ENCODE measurements at regions of chr13 and their contacts with region 1.

Region 1: DNA sequence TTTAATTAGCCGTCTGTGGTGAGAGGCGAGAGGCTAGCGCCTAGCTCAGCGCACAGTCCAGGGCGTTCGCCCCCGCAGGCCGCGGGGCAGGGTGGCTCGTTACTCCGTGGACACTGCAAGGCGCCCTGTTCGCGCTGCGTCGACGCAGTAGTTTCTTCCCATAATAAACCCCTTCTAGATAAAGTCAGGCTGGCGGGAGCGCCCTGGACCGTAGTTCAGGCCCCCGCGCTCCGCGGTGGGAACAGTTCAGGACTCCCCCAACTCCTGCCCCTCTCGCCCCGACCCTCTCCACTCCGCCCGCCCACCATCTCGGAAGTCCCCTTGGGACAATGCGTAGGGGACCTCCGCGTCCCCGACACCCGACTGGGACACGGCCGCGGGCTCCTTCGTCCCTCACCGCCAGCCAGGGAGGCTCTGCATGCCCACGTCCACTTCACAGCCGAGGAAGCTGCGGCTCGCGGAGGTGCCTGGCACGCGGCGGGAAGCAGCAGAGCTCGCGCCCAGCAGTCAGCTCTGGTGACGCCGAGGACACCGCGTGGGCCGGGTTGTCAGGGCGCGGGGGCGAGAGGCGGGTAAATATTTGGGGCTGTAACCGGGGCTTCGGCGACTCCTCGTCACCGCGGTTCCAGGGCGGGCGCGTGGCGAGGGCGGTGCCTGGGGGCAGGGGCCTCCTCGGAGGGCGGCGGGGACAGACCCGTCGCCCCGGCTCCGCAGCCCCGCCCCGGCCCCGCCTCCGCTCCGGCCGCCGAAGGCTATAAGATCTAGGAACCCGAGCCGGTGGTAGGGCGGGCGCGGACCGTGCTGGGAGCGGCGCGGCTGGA is at the start of gene RGCC:
- DNase-seq: peak; percentile 89 to 98 (median 94)
- ATAC-seq: peak; percentile 90
- H3K4me3 ChIP-seq: peak within 1 kb of the TSS; percentile 84
- H3K4me3 Mint-ChIP-seq: peak within 1 kb of the TSS; percentile 91 to 98 (median 96)
- H3K27ac ChIP-seq: peak within 1 kb of the TSS; percentile 97
- H3K27ac Mint-ChIP-seq: peak within 1 kb of the TSS; percentile 93 to 99 (median 98)
- H3K4me1 ChIP-seq: peaks cover 22 to 37% of the 10 kb centered on the region in 2 donors
- H3K4me1 Mint-ChIP-seq: peaks cover 28 to 47% (median 38%) of the 10 kb centered on the region in 7 donors
- H3K27me3 ChIP-seq: no peaks in the 10 kb centered on the region
- H3K27me3 Mint-ChIP-seq: peaks cover 0 to 26% (median 0%) of the 10 kb centered on the region in 5 donors
- total RNA-seq, gene RGCC: 45.9 to 402 (median 197) TPM

Region 2: DNA sequence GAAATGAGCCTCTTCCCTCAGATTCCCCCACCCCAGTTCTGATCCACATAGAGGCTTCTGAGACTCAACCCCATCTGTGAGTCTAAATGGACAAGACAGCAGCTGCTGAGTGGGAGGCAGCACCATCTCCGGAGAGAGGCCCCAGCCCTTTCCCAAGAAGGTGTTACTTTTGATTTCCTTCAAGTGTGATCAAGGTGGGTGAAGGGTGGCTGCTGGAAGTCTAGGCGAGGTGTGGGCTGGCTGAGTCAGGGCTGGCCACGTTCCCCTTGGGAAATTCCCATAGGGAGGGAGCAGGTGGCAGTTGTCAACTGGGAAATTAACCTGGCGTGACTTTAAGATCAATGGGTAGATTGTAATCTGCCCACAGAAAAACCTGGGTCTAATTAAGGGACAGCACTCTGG is 938.5 kb before region 1 on chr13:
- CTCF ChIA-PET with region 1: no interaction called
- POLR2A ChIA-PET with region 1: no interaction called
- intact Hi-C with region 1: no loop called
- DNase-seq: peak in 1 of 9 donors; percentile 75
- ATAC-seq: peak; percentile 46
- H3K4me3 ChIP-seq: no peak overlapping the region
- H3K4me3 Mint-ChIP-seq: peak overlapping the region in 2 of 10 donors; percentile 27 to 53
- H3K27ac ChIP-seq: no peak overlapping the region
- H3K27ac Mint-ChIP-seq: peak overlapping the region in 3 of 9 donors; percentile 1 to 71 (median 36)
- H3K4me1 ChIP-seq: peaks cover 14 to 15% of the 10 kb centered on the region in 2 donors
- H3K4me1 Mint-ChIP-seq: peaks cover 17 to 65% (median 37%) of the 10 kb centered on the region in 7 donors
- H3K27me3 ChIP-seq: no peaks in the 10 kb centered on the region
- H3K27me3 Mint-ChIP-seq: no peaks in the 10 kb centered on the region

Region 3: DNA sequence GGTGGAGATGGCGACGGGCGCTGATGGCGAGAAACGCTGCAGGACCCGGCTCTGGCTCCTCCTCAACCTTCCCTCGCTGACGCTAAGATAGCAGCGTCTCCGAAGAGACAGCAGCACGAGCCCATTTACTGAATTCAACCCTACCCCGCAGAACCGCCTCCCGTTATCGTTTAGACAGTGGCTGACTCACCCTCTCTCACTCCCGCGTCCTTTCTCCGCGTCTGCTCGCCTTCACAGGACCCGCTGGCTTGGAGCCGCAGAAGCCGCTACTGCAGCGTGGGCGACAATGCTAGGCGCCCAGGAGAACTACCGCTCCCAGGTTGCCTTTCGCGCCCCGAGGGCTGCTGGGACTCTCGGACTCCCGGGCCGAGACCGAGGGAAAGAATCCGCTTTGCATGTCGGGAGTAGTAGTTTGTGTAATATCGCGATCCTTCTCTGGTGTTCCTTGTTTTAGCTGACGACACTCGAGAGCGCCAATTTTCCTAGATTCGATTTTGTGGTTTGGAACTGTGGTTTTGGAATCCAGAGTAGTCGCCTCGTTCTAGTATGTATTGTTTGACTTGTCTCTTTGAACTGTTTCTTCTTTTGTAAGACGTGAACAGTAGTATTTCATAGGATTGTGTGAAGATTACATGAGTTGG is 324.3 kb before region 1 on chr13 and contains the start of gene KBTBD6:
- CTCF ChIA-PET with region 1: no interaction called
- POLR2A ChIA-PET with region 1: no interaction called
- intact Hi-C with region 1: loop called (anchors 2 to 5 kb)
- DNase-seq: peak; percentile 76 to 93 (median 87)
- ATAC-seq: peak; percentile 98
- H3K4me3 ChIP-seq: peak within 1 kb of the TSS; percentile 77
- H3K4me3 Mint-ChIP-seq: peak within 1 kb of the TSS; percentile 94 to 99 (median 98)
- H3K27ac ChIP-seq: peak within 1 kb of the TSS; percentile 67
- H3K27ac Mint-ChIP-seq: peak within 1 kb of the TSS; percentile 91 to 97 (median 93)
- H3K4me1 ChIP-seq: peaks cover 15 to 24% of the 10 kb centered on the region in 2 donors
- H3K4me1 Mint-ChIP-seq: peaks cover 32 to 60% (median 54%) of the 10 kb centered on the region in 7 donors
- H3K27me3 ChIP-seq: no peaks in the 10 kb centered on the region
- H3K27me3 Mint-ChIP-seq: no peaks in the 10 kb centered on the region
- total RNA-seq, gene KBTBD6: 3.9 to 9.2 (median 7.7) TPM

Region 4: GRCh38 chr13:41310963-41311606 is 145.9 kb before region 1 on chr13 and contains the start of gene NAA16:
- CTCF ChIA-PET with region 1: no interaction called
- POLR2A ChIA-PET with region 1: interaction called, 3 read pairs
- intact Hi-C with region 1: loop called (anchors 2 kb)
- DNase-seq: peak; percentile 91 to 99 (median 94)
- ATAC-seq: peak; percentile 91
- H3K4me3 ChIP-seq: peak within 1 kb of the TSS; percentile 97
- H3K4me3 Mint-ChIP-seq: peak within 1 kb of the TSS; percentile 80 to 99 (median 98)
- H3K27ac ChIP-seq: peak within 1 kb of the TSS; percentile 91
- H3K27ac Mint-ChIP-seq: peak within 1 kb of the TSS; percentile 76 to 96 (median 95)
- H3K4me1 ChIP-seq: peaks cover 25 to 29% of the 10 kb centered on the region in 2 donors
- H3K4me1 Mint-ChIP-seq: peaks cover 14 to 55% (median 41%) of the 10 kb centered on the region in 7 donors
- H3K27me3 ChIP-seq: no peaks in the 10 kb centered on the region
- H3K27me3 Mint-ChIP-seq: no peaks in the 10 kb centered on the region
- total RNA-seq, gene NAA16: 30.6 to 99.6 (median 90.4) TPM

Region 5: DNA sequence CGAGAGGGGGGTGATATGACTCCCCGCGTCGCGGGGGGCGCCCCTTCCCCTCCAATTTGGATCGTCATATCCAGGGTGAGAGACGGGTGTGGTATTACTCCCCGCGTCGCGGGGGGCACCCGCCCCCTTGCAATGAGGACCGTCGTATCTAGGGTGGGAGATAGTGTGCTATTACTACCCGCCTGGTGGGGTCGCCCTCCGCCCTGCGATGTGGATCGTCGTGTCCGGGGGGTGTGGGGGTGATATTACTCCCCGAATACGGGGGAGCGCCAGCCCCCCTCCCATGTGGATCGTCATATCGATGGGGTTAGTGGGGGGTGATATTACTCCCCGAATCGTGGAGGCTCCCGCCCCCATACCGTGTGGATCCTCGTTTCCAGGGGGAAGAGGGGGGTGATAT is 28.8 kb before region 1 on chr13:
- CTCF ChIA-PET with region 1: interaction called, 3 read pairs
- POLR2A ChIA-PET with region 1: no interaction called
- intact Hi-C with region 1: loop called in 1 of 2 experiments (anchors 2 kb)
- DNase-seq: peak; percentile 14 to 55 (median 38)
- ATAC-seq: peak; percentile 93
- H3K4me3 ChIP-seq: no peak overlapping the region
- H3K4me3 Mint-ChIP-seq: peak overlapping the region; percentile 13 to 86 (median 62)
- H3K27ac ChIP-seq: no peak overlapping the region
- H3K27ac Mint-ChIP-seq: peak overlapping the region in 2 of 9 donors; percentile 64 to 84
- H3K4me1 ChIP-seq: peaks cover 0 to 6% of the 10 kb centered on the region in 2 donors
- H3K4me1 Mint-ChIP-seq: peaks cover 4 to 15% (median 11%) of the 10 kb centered on the region in 7 donors
- H3K27me3 ChIP-seq: no peaks in the 10 kb centered on the region
- H3K27me3 Mint-ChIP-seq: peaks cover 0 to 7% (median 6%) of the 10 kb centered on the region in 5 donors

Region 6: DNA sequence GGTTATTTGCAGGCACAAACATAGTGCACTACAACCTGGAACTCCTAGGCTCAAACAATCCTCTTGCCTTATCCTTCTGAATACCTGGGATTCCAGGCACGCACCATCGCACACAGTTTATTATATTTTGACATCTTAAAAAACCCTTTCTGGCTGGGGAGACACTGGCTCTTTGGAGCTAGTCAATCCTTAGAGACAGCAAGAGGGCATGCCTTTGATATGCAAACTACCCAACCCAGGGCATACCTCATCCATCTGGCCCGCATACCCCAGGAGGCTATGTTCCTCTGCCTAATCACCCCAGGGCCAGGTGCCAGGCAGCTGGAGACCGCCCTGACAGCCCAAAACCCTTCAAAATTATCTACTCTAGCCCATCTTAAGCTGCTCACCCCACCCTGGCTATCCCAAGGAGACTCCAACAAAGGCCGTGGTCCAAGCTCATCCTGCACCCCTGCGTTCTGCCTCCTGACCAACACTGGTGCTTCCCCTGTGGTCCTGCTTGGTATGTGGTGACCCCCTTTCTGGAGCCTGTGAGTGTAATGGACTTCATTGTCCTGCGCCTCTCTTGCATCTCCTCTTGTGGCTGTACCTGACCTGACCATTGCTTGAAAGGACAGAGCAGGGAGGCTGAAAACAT is 86.8 kb after region 1 on chr13:
- CTCF ChIA-PET with region 1: no interaction called
- POLR2A ChIA-PET with region 1: interaction called, 10 read pairs
- intact Hi-C with region 1: loop called in 1 of 2 experiments (anchors 5 kb)
- DNase-seq: no peak
- ATAC-seq: no peak
- H3K4me3 ChIP-seq: no peak overlapping the region
- H3K4me3 Mint-ChIP-seq: no peak overlapping the region
- H3K27ac ChIP-seq: no peak overlapping the region
- H3K27ac Mint-ChIP-seq: peak overlapping the region in 4 of 9 donors; percentile 8 to 83 (median 34)
- H3K4me1 ChIP-seq: peaks cover 0 to 9% of the 10 kb centered on the region in 2 donors
- H3K4me1 Mint-ChIP-seq: peaks cover 9 to 33% (median 22%) of the 10 kb centered on the region in 7 donors
- H3K27me3 ChIP-seq: no peaks in the 10 kb centered on the region
- H3K27me3 Mint-ChIP-seq: no peaks in the 10 kb centered on the region

Region 7: DNA sequence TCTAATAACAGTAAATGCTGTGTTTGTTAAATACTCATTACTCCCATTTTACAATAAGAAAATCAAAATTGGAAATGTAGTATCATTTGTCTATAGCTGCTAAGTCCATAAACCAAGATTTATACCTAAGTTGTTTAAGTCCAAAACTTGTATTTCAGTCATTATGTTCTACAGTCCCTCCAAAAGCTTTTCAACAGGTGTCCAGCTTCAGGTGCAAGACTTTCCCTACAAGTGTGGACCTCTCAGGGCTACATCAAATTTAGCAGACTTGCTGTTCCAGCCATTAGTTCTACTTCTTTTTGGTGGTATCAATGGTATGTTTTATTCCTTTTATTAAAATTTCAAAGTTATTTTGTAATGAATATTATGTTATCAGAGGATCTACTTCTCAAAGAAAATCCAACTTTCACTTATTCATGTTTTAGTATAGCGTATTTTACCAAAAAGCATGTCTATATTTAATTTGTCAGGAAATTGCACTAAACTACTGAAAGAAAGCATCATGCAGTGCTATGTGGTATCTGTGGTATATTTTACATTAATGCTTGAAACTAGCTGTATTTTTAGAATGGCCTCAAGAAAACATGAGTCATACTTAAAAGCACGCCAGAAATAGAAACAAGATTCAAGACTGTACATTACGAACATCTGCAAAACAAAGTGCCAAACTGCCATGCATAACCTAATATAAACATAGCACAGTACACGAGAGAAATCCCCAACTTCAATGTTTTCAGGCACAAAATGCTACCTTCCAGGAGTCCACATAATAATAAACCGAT is 459.4 kb after region 1 on chr13:
- CTCF ChIA-PET with region 1: no interaction called
- POLR2A ChIA-PET with region 1: no interaction called
- intact Hi-C with region 1: loop called in 1 of 2 experiments (anchors 2 kb)
- DNase-seq: peak in 5 of 9 donors; percentile 15 to 47 (median 30)
- ATAC-seq: peak; percentile 76
- H3K4me3 ChIP-seq: no peak overlapping the region
- H3K4me3 Mint-ChIP-seq: peak overlapping the region in 9 of 10 donors; percentile 26 to 81 (median 57)
- H3K27ac ChIP-seq: no peak overlapping the region
- H3K27ac Mint-ChIP-seq: peak overlapping the region in 7 of 9 donors; percentile 0 to 87 (median 47)
- H3K4me1 ChIP-seq: peaks cover 11 to 15% of the 10 kb centered on the region in 2 donors
- H3K4me1 Mint-ChIP-seq: peaks cover 26 to 65% (median 44%) of the 10 kb centered on the region in 7 donors
- H3K27me3 ChIP-seq: no peaks in the 10 kb centered on the region
- H3K27me3 Mint-ChIP-seq: no peaks in the 10 kb centered on the region